H1 (cell line): ENCODE measurements at regions of chr16 and their contacts with region 1.

Region 1: DNA sequence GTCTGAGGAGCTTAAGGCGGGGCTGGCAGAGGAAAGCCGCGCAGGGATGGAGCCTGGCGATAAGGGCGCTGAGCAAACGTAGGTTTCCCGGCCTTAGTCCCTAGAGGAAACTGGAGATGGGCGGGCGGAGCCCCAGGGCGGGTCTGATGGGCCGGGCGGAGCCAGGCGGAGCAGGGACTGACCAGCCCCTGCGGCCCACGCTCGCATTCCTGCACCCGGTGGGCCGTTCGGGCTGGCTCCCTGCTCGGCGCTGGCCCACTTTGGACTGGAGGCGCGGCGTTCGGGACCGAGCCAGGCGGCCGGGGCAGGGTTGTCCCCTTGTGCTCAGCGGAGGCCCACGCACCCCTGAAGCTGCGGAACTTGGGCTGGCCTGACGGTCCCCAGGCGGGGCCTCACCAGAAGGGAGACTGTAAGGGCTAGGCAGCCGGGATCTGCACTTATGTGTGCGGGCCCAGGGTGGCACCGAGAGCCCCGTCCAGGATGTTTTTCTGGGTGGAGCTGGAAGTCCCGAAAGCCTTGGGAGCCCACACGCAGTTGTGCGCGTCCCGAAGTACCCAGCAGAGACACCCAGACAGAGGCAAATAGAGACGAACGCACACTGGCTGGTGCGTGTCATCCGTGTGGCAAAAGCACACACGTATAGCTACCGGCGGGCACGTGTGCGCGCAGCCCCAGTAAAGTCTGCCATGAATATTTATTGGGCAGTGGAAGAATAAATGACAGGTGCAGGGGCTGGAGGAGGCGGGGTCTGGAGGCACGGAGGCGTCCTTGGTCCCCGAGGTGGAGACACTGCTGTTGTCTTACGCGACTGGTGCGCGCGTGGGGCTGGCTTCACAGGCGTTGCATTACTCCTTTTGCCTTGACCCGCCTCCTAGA is 1.4 kb downstream of the PYDC1 start:
- DNase-seq: peak; percentile 73 to 86
- H3K4me3 ChIP-seq: peak overlapping the region; percentile 30 to 74 (median 59)
- H3K27ac ChIP-seq: no peak overlapping the region
- H3K4me1 ChIP-seq: peaks cover 0 to 33% (median 20%) of the 10 kb centered on the region in 4 experiments; a peak in 6 of 7 replicates
- H3K27me3 ChIP-seq: peaks cover 8 to 21% (median 19%) of the 10 kb centered on the region in 4 experiments
- CTCF ChIP-seq: 0 out of 4 replicates have a peak, but pooled peaks of 1 of the 3 experiments have one; percentile 5
- EP300 ChIP-seq: no peak
- POLR2A ChIP-seq: no peak
- RAD21 ChIP-seq: no peak; a peak in 1 of 4 replicates

Region 2: DNA sequence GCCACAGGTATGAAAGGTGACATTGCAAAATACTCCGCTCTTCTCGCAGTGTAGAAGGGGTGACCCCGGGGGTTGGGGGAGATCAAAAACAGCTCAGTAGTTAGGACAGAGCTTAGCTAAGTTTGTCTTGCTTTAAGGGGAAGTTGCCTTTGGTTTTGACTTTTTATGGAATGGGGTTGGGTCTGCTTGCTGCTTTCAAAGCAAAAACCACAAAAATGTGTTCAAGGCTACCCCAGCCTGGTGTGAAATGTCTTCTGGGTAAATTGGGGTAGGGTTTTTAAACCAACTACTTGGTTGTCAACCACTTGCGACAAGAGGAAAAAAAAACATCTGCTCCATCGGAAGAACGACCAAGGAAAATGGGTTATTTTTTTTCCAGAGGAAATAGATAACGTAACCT is 29.3 kb before region 1 on chr16:
- CTCF ChIA-PET with region 1: interaction called, 3 read pairs
- POLR2A ChIA-PET with region 1: interaction called, 430 read pairs
- DNase-seq: no peak
- H3K4me3 ChIP-seq: no peak overlapping the region
- H3K27ac ChIP-seq: no peak overlapping the region
- H3K4me1 ChIP-seq: peaks cover 0 to 5% (median 1%) of the 10 kb centered on the region in 4 experiments; a peak in 5 of 7 replicates
- H3K27me3 ChIP-seq: no peaks in the 10 kb centered on the region
- CTCF ChIP-seq: no peak
- EP300 ChIP-seq: no peak
- POLR2A ChIP-seq: peak; percentile 9 to 27; a peak in 2 of 3 replicates
- RAD21 ChIP-seq: no peak

Region 3: DNA sequence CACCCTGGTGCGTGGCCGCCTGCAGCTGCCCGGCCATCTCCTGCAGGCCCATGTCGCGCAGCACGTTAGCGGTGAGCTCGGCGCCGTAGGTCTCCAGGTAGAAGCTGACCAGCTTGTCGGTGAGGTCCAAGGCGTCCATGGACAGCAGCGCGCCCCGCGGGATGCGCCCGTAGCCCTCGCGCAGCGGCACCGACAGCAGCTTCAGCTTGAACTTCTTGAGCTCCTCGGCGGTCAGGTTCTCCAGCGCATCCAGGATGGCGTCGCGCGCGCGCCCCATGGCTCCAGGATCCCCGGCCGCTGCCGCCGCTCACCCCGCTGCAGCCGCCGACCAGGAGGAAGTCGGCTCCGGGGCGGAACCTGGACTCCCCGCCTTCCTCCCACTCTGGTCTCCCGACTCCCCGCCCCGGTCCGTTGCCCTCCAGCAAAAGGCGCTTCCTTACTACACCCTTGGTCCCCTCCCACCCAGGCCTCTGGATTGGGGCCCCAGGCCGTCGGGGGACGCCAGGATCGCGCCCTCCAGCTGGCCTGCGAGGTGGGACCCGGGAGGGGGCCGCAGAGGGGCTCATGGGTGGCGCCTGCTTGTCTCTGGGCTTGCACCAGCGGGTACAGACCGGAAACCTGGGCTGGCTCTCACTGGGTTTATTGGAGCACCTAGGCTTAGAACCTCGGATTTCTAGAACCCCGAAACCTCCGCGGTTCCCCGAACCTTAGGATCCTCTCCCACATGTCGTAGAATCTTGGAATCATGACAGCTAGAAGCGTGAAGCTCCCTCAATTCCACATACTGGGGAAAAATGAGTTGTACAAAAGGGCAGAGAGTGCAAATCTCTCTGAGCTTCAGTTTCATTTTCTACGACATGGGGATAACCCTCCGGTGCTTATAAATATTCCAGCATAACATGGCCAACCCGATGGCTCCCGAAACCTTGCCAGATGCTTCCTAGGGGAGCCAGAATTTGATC is 12.8 kb before region 1 on chr16 and contains the start of gene PYCARD:
- CTCF ChIA-PET with region 1: interaction called, 10 read pairs
- POLR2A ChIA-PET with region 1: interaction called, 430 read pairs
- DNase-seq: peak in 1 of 2 experiments; percentile 79
- H3K4me3 ChIP-seq: peak within 1 kb of the TSS; percentile 61 to 74 (median 72)
- H3K27ac ChIP-seq: no peak within 1 kb of the TSS
- H3K4me1 ChIP-seq: peaks cover 0 to 7% (median 4%) of the 10 kb centered on the region in 4 experiments; a peak in 5 of 7 replicates
- H3K27me3 ChIP-seq: peaks cover 0 to 6% (median 3%) of the 10 kb centered on the region in 4 experiments; a peak in 3 of 7 replicates
- CTCF ChIP-seq: no peak
- EP300 ChIP-seq: no peak
- POLR2A ChIP-seq: peak; percentile 0 to 12; a peak in 2 of 3 replicates
- RAD21 ChIP-seq: no peak
- total RNA-seq, gene PYCARD: 29.9 and 32.2 TPM in 2 replicates

Region 4: DNA sequence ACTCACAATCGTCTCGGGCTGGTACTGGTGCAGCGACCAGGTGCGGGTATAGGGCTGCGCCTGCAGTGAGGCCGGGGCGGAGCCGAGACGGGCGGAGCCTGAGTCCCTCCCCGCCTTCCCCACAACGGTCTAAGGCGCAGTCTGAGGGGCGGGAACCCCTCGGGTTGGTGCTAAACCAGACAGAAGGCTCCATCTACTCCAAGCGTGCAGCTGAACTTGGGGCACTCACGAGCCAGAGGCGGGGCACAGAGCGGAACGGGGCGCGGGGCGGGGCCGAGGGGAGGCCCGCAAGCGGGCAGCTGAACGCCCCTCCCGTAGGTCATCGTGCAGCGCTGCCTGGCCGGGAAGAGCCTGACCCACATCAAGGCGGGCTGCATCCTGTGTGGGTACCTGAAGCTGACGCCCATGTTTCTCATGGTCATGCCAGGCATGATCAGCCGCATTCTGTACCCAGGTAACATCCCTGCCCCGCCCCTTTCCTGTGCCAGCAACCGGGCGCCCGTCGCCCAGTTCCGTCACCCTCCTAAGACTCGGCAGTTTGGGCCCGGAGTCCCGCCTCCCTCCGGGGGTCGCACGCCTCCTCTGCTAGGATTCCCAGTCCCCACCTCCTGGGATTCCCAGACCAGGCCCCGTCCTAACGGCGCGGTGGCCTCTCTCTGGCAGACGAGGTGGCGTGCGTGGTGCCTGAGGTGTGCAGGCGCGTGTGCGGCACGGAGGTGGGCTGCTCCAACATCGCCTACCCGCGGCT is 272.4 kb after region 1 on chr16:
- CTCF ChIA-PET with region 1: no interaction called
- POLR2A ChIA-PET with region 1: no interaction called
- DNase-seq: peak in 1 of 2 experiments; percentile 87
- H3K4me3 ChIP-seq: peak overlapping the region; percentile 44 to 64 (median 54)
- H3K27ac ChIP-seq: no peak overlapping the region
- H3K4me1 ChIP-seq: peaks cover 0 to 8% (median 5%) of the 10 kb centered on the region in 4 experiments; a peak in 5 of 7 replicates
- H3K27me3 ChIP-seq: peaks cover 14 to 54% (median 42%) of the 10 kb centered on the region in 4 experiments
- CTCF ChIP-seq: no peak
- EP300 ChIP-seq: no peak
- POLR2A ChIP-seq: peak in 1 of 2 experiments; percentile 5; a peak in 1 of 3 replicates
- RAD21 ChIP-seq: no peak